ENCODE measurements at regions of chr17 and their contacts with region 1.

Region 1: GRCh38 chr17:39687811-39688518 is at the start of gene PGAP3:
- DNase-seq: peak; percentile 81 to 90
- H3K4me3 ChIP-seq: peak within 1 kb of the TSS; percentile 59 to 64
- H3K27ac ChIP-seq: peak within 1 kb of the TSS; percentile 85 to 86
- H3K4me1 ChIP-seq: peaks cover 0 to 6% of the 10 kb centered on the region in 2 donors
- H3K27me3 ChIP-seq: no peaks in the 10 kb centered on the region
- CTCF ChIP-seq: peak in 1 of 4 experiments; percentile 20
- POLR2A ChIP-seq: peak in 1 of 2 donors; percentile 49
- total RNA-seq, gene PGAP3: 4.6 to 24.8 (median 19.5) TPM

Region 2: GRCh38 chr17:39636927-39637736 is 50.8 kb before region 1 on chr17 and contains the start of gene STARD3:
- intact Hi-C with region 1: loop called (anchors 10 kb)
- DNase-seq: peak; percentile 90 to 91
- H3K4me3 ChIP-seq: peak within 1 kb of the TSS; percentile 59 to 88
- H3K27ac ChIP-seq: peak within 1 kb of the TSS; percentile 89 to 93
- H3K4me1 ChIP-seq: peaks cover 7 to 19% of the 10 kb centered on the region in 2 donors
- H3K27me3 ChIP-seq: no peaks in the 10 kb centered on the region
- CTCF ChIP-seq: peak in 3 of 4 experiments; percentile 9 to 38 (median 25)
- POLR2A ChIP-seq: peak; percentile 39 to 64
- total RNA-seq, gene STARD3: 21.0 to 62.3 (median 26.0) TPM

Measured in uterus (tissue), 4 donors.